Left ventricle myocardium inferior (tissue), 1 donor: ENCODE measurements at regions of chr2 and their contacts with region 1.

Region 1: GRCh38 chr2:178914259-178914849 is 107.1 kb upstream of the TTN start:
- DNase-seq: peak; percentile 83
- H3K4me3 ChIP-seq: no peak overlapping the region
- H3K27ac ChIP-seq: no peak overlapping the region
- H3K4me1 ChIP-seq: peaks cover 44% of the 10 kb centered on the region
- H3K27me3 ChIP-seq: no peaks in the 10 kb centered on the region
- CTCF ChIP-seq: peak; percentile 92

Region 2: DNA sequence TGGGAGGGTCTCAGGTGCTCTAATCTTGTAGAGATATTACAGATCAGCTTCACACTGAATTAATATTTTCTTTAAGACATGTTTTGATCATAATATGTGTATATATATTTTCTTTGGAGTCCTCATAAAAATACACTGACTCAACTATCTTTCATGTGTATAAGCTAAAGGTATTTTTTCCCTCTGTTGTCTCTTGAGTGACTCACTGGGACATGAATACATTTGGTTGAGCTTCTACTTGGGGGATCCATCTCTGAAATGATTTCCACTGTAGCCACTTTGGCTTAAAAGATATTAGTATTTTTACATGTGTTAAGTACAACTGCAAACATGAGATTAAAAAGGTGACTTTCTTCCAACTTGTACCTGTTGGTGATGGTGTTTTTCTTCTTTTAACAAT is 247.9 kb before region 1 on chr2:
- intact Hi-C with region 1: no loop called
- DNase-seq: no peak
- H3K4me3 ChIP-seq: no peak overlapping the region
- H3K27ac ChIP-seq: peak overlapping the region; percentile 11
- H3K4me1 ChIP-seq: peaks cover 13% of the 10 kb centered on the region
- H3K27me3 ChIP-seq: no peaks in the 10 kb centered on the region
- CTCF ChIP-seq: no peak

Region 3: GRCh38 chr2:178683877-178684276 is 230.5 kb before region 1 on chr2:
- intact Hi-C with region 1: no loop called
- DNase-seq: no peak
- H3K4me3 ChIP-seq: no peak overlapping the region
- H3K27ac ChIP-seq: no peak overlapping the region
- H3K4me1 ChIP-seq: peaks cover 6% of the 10 kb centered on the region
- H3K27me3 ChIP-seq: no peaks in the 10 kb centered on the region
- CTCF ChIP-seq: no peak

Region 4: GRCh38 chr2:178796079-178796677 is 118.2 kb before region 1 on chr2:
- intact Hi-C with region 1: loop called (anchors 1 kb)
- DNase-seq: no peak
- H3K4me3 ChIP-seq: no peak overlapping the region
- H3K27ac ChIP-seq: no peak overlapping the region
- H3K4me1 ChIP-seq: peaks cover 58% of the 10 kb centered on the region
- H3K27me3 ChIP-seq: no peaks in the 10 kb centered on the region
- CTCF ChIP-seq: peak; percentile 73